Vagina (tissue), 2 donors: ENCODE measurements at regions of chr13 and their contacts with region 1.

Region 1: DNA sequence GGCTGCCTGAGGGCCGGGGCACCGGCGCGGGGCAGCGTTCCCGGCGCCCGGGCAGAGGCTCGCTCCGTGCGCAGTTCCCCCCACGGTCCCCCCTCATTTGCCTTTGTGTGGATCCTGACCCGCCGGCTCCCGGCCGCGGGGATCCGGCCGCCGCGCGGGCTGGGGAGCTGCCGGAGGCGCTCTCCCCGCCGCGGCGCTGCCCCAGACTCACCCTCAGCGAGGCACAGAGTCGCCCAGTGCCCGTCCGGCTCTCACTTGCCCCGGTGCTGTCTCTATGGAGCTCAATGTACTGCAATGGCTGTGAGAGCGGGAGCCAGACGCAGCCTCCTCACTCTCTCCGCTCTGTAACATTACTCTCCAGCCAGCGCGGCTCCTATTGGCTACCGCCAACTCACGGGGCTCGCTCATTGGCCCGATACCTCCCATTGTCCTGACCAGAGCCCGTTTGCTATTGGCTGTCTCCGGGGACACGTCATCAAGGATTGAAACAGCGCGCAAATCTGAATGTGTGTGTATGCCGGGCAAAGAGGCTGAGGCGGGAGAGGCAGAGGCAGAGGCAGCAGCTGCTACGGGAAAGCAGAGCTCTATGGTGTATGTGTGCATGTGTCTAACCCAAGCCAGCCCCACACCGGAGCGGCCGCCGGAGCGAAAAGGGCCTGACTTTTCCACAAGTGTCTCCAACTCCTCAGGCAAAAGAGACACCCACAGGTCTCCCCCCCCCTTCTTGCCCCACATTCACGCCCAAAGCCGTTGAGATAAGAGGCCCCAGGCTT is at the start of gene HMGB1:
- DNase-seq: peak; percentile 99 to 100
- H3K4me3 ChIP-seq: peak within 1 kb of the TSS; percentile 65 to 87
- H3K27ac ChIP-seq: peak within 1 kb of the TSS; percentile 100
- H3K4me1 ChIP-seq: peaks cover 34% of the 10 kb centered on the region
- H3K27me3 ChIP-seq: no peaks in the 10 kb centered on the region
- CTCF ChIP-seq: no peak
- POLR2A ChIP-seq: peak; percentile 99
- total RNA-seq, gene HMGB1: 215 TPM

Region 2: DNA sequence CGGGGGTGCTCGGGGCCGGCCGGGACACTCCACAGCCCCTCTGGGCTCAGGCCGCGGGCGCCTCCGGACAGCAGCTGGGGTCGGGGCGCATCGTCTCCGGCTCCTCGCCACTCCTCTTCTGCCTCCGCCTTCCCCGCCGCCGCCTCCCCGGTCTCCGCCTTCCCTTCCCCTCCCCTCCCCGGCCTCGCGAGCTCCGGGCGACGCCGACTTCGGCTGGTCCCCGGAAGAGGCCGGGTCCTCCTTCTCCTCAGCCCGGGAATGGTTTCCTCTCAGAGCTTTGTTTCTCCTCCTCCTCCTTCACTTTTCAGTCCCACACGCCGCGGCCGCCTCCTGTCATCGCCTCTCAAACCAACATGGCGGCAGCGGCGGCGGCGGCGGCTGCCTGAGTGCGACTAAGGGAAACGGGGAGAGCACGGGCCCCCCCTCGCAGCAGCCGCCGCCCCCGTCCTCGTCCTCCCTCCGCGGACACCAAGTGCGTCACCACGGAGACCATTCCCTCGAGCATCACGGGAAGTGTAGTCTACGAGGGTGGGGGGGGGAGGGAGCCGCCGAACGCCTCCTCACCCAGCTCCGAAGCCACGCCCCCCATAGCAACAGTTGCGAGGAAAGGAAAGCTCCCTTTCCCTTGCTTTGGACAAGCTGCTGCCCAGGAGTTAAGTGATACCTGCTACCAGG is 615.4 kb before region 1 on chr13 and contains the start of gene UBL3:
- intact Hi-C with region 1: loop called (anchors 10 kb)
- DNase-seq: peak in 1 of 2 donors; percentile 99
- H3K4me3 ChIP-seq: peak within 1 kb of the TSS; percentile 78 to 83
- H3K27ac ChIP-seq: peak within 1 kb of the TSS; percentile 98
- H3K4me1 ChIP-seq: peaks cover 6% of the 10 kb centered on the region
- H3K27me3 ChIP-seq: no peaks in the 10 kb centered on the region
- CTCF ChIP-seq: no peak
- POLR2A ChIP-seq: peak in 1 of 2 donors; percentile 88
- total RNA-seq, gene UBL3: 33.4 TPM

Region 3: DNA sequence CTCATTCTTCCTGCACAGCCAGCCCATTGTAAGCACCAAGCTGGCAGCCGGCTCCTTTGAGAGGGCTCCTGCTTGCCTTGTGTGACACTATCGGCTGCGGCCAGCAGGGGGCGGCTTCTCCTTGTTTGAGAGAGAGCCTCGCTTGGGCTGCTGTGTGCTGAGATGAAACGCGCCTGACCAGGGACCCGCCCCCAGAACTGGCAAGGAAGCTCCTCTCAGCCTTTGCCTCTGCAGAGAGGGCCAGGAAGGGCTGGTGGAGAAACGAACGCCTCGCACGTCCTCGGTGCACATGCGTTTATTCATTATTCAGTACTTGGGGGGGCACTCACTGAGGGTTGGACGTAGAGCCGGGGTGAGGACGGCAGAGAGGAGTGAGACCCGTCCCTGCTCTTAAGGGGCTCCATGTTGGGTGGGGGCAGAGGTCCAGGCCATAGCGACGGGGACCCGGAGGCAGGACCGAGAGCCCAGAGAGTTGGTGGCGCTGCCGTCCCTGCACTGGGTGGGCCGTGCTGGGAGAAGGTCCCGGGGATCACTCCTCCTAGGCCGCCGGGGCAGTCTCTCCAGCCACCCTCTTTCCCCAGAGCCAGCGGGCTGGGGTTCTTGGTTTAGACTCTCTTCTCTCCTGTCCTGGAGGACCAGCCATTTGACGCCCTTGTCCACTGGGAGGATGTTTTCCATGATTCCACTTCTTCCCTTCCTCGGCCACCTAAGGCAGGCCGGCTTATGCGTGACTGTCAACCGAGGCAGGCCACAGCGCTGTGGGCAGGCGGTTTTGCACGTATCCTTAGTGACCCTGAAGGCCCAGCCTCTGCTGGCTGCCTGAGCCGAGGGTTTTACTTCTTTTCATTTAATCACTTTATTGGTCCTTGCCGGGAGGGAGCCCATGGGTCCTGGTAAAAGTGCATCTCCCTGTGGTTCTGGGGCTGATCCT is 332.9 kb before region 1 on chr13:
- intact Hi-C with region 1: loop called (anchors 10 kb)
- DNase-seq: peak in 1 of 2 donors; percentile 96
- H3K4me3 ChIP-seq: no peak overlapping the region
- H3K27ac ChIP-seq: peak overlapping the region; percentile 71
- H3K4me1 ChIP-seq: peaks cover 27% of the 10 kb centered on the region
- H3K27me3 ChIP-seq: no peaks in the 10 kb centered on the region
- CTCF ChIP-seq: peak; percentile 83 to 96 (median 87)
- POLR2A ChIP-seq: no peak

Region 4: GRCh38 chr13:30421093-30422053 is 44.4 kb before region 1 on chr13:
- intact Hi-C with region 1: loop called (anchors 2 kb)
- DNase-seq: no peak
- H3K4me3 ChIP-seq: peak overlapping the region; percentile 62 to 73
- H3K27ac ChIP-seq: peak overlapping the region; percentile 97
- H3K4me1 ChIP-seq: peaks cover 52% of the 10 kb centered on the region
- H3K27me3 ChIP-seq: no peaks in the 10 kb centered on the region
- CTCF ChIP-seq: no peak
- POLR2A ChIP-seq: peak in 1 of 2 donors; percentile 70

Region 5: GRCh38 chr13:30617315-30618185 is 151.8 kb after region 1 on chr13 and contains the start of gene USPL1:
- intact Hi-C with region 1: loop called (anchors 10 kb)
- DNase-seq: peak; percentile 99
- H3K4me3 ChIP-seq: peak within 1 kb of the TSS; percentile 67 to 71
- H3K27ac ChIP-seq: peak within 1 kb of the TSS; percentile 100
- H3K4me1 ChIP-seq: peaks cover 55% of the 10 kb centered on the region
- H3K27me3 ChIP-seq: no peaks in the 10 kb centered on the region
- CTCF ChIP-seq: peak in 2 of 3 experiments; percentile 22 to 67
- POLR2A ChIP-seq: peak; percentile 30 to 98
- total RNA-seq, gene USPL1: 18.4 TPM

Region 6: GRCh38 chr13:30802953-30803478 is 337.2 kb after region 1 on chr13:
- intact Hi-C with region 1: loop called (anchors 10 kb)
- DNase-seq: no peak
- H3K4me3 ChIP-seq: peak overlapping the region; percentile 36 to 44
- H3K27ac ChIP-seq: peak overlapping the region; percentile 57
- H3K4me1 ChIP-seq: peaks cover 49% of the 10 kb centered on the region
- H3K27me3 ChIP-seq: no peaks in the 10 kb centered on the region
- CTCF ChIP-seq: peak; percentile 71 to 95 (median 92)
- POLR2A ChIP-seq: peak in 1 of 2 donors; percentile 10

Region 7: DNA sequence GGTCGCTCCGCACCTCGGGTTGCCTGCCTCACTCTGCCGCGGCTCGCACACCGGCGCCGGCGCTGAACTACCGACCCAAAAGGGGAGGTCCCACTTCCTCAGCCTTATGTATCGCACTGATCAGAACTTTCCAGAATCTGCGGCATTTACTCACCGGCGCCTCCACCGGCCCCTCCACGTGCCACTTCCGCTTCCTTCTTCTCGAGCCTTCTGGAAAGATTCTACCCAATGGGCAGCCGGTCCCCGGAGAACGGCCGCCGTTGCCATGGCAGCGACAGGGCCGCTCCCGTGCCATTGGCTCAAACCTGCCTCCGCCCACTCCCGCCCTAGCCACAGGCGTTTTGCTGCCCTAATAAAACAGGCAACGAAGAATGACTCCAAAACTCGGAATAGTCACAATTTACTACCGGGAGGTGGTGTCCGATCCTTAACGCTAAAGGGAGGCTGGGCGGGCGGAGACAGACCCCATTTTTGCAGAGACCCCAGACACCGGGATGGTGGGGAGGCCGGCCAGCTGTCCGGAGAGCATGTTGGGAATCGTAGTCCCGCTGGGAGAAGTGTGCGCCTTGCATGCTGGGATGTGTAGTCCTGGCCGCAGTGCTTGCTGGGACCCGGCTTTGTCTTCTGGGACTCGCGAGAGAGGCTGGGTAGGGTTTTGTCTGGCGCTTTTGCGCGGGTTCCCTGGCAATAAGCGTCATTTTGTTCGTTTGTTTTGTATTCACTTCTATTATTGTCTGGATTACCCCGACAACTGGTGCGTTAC is 696.2 kb after region 1 on chr13 and contains the start of gene HSPH1:
- intact Hi-C with region 1: loop called (anchors 5 kb)
- DNase-seq: peak; percentile 99
- H3K4me3 ChIP-seq: peak within 1 kb of the TSS; percentile 86 to 91
- H3K27ac ChIP-seq: peak within 1 kb of the TSS; percentile 100
- H3K4me1 ChIP-seq: peaks cover 25% of the 10 kb centered on the region
- H3K27me3 ChIP-seq: no peaks in the 10 kb centered on the region
- CTCF ChIP-seq: no peak
- POLR2A ChIP-seq: peak; percentile 59 to 84
- total RNA-seq, gene HSPH1: 75.4 TPM